Panc1 (cell line): ENCODE measurements at regions of chr2 and their contacts with region 1.

Region 1: DNA sequence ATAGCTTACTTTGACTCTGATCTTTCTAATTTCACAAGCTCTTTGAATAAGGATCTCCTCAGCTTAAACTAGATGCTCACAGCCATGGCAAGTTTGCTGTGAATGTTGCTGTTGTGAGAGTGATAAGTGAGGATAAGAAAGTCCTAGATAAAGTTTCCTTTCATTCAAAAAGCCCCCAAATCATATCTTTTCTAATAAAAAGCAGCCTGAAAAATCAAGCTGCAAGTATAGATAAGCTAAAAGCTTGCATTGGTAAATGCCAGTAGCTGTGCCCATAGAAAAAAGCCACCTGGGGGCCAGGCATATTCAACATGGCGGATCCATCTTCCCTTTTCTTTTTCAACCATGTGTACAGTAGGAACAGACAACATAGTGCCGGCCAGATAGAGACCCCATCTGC is 4.3 kb downstream of the NLRC4 start:
- DNase-seq: no peak
- ATAC-seq: no peak
- H3K4me3 ChIP-seq: no peak overlapping the region
- H3K27ac ChIP-seq: no peak overlapping the region
- H3K4me1 ChIP-seq: no peaks in the 10 kb centered on the region
- H3K27me3 ChIP-seq: no peaks in the 10 kb centered on the region
- CTCF ChIP-seq: no peak

Region 2: DNA sequence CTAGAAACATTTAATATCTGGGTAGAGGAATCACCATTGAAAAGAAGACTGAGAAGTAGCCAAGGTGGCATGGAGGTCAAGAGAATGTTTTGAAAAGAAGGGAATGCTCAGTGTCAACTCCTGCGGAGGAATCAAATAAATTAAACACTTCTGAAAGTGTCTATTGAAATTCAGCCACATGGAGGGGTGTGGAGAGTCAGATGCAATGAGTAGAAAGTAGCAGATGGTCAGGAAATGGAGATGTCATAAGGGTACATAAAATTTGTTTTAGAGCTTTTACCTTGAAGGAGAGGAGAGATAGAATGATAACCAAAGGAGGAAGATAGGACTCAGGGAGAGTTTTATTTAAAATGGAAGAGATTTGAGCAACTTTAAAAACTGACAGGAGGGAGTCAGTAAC is 30.7 kb before region 1 on chr2:
- CTCF ChIA-PET with region 1: no interaction called
- POLR2A ChIA-PET with region 1: interaction called, 15 read pairs
- in situ Hi-C with region 1: no loop called
- intact Hi-C with region 1: no loop called
- DNase-seq: no peak
- ATAC-seq: 0 out of 2 replicates have a peak, but pooled peaks have one; percentile 15
- H3K4me3 ChIP-seq: no peak overlapping the region
- H3K27ac ChIP-seq: no peak overlapping the region
- H3K4me1 ChIP-seq: no peaks in the 10 kb centered on the region; the same call in 1 of the 2 replicates
- H3K27me3 ChIP-seq: no peaks in the 10 kb centered on the region
- CTCF ChIP-seq: no peak

Region 3: DNA sequence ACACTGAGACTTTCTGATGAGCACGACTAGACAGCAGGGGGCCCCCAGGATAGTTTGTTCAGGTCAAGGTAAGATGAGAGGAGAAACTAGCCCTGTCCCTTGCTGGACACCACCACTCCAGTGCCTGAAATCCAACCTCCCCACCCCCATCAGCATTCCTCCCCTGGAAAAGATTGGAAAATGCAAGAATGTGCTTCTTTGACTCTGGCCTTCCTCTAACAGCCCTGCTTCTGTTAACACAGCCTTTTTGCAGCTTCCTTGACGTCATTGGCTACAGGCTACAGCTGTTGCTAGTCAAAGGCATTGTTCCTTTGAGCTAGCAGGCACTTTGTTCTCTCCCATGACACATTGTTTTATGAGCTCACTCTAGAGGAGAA is 666.3 kb after region 1 on chr2:
- CTCF ChIA-PET with region 1: no interaction called
- POLR2A ChIA-PET with region 1: no interaction called
- in situ Hi-C with region 1: no loop called
- intact Hi-C with region 1: no loop called
- DNase-seq: no peak
- ATAC-seq: no peak
- H3K4me3 ChIP-seq: no peak overlapping the region
- H3K27ac ChIP-seq: no peak overlapping the region
- H3K4me1 ChIP-seq: no peaks in the 10 kb centered on the region
- H3K27me3 ChIP-seq: peaks cover 2% of the 10 kb centered on the region; the same call in 1 of the 2 replicates
- CTCF ChIP-seq: no peak